ENCODE measurements at regions of chr19 and their contacts with region 1.

Region 1: DNA sequence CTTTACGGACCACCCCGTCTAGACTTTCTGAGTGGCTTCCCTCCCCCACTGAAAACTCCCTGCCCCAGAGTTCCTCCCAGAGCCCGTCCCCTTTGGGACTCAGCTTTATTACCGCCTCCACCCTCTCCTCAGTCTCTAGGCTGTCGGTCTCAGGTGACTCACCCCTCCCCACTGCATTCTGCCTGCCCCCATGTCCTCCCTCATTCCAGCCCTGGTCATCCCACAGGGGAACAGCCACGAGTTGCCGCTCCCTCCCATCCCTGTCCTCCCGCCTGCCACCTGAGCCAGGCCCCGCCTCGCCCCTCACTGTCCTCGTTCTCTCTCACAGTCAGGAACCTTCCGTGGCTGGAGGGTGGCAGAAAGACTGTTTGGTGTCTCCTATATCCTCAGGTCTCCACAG is 57.3 kb downstream of the SMARCA4 start:
- DNase-seq: no peak
- ATAC-seq: no peak
- H3K4me3 ChIP-seq: no peak overlapping the region
- H3K27ac ChIP-seq: no peak overlapping the region
- H3K4me1 ChIP-seq: peaks cover 0 to 18% (median 0%) of the 10 kb centered on the region in 12 donors
- H3K27me3 ChIP-seq: no peaks in the 10 kb centered on the region
- CTCF ChIP-seq: no peak
- POLR2A ChIP-seq: no peak

Region 2: GRCh38 chr19:10238172-10238783 is 779.9 kb before region 1 on chr19:
- intact Hi-C with region 1: no loop called
- DNase-seq: peak; percentile 59 to 87 (median 81)
- ATAC-seq: peak; percentile 17 to 81 (median 56)
- H3K4me3 ChIP-seq: no peak overlapping the region
- H3K27ac ChIP-seq: peak overlapping the region in 6 of 12 donors; percentile 2 to 75 (median 54)
- H3K4me1 ChIP-seq: peaks cover 0 to 37% (median 15%) of the 10 kb centered on the region in 12 donors
- H3K27me3 ChIP-seq: no peaks in the 10 kb centered on the region
- CTCF ChIP-seq: no peak
- POLR2A ChIP-seq: no peak

Region 3: GRCh38 chr19:11111117-11111774 is 93.1 kb after region 1 on chr19:
- intact Hi-C with region 1: loop called in 1 of 10 experiments (anchors 5 kb)
- DNase-seq: no peak
- ATAC-seq: no peak
- H3K4me3 ChIP-seq: no peak overlapping the region
- H3K27ac ChIP-seq: no peak overlapping the region
- H3K4me1 ChIP-seq: no peaks in the 10 kb centered on the region
- H3K27me3 ChIP-seq: no peaks in the 10 kb centered on the region
- CTCF ChIP-seq: no peak
- POLR2A ChIP-seq: no peak

Measured in heart left ventricle (tissue), 16 donors.